ENCODE measurements at regions of chr6 and their contacts with region 1.

Region 1: GRCh38 chr6:110944681-110945151 is 13.8 kb upstream of the GTF3C6 start:
- DNase-seq: peak; percentile 71
- ATAC-seq: peak; percentile 98
- H3K4me3 Mint-ChIP-seq: no peak overlapping the region
- H3K27ac Mint-ChIP-seq: peak overlapping the region; percentile 60
- H3K4me1 Mint-ChIP-seq: peaks cover 15% of the 10 kb centered on the region
- H3K27me3 Mint-ChIP-seq: no peaks in the 10 kb centered on the region

Region 2: GRCh38 chr6:110930781-110931180 is 13.9 kb before region 1 on chr6:
- CTCF ChIA-PET with region 1: interaction called, 5 read pairs
- POLR2A ChIA-PET with region 1: interaction called, 3 read pairs
- intact Hi-C with region 1: loop called in 1 of 2 experiments (anchors 2 kb)
- DNase-seq: no peak
- ATAC-seq: no peak
- H3K4me3 Mint-ChIP-seq: no peak overlapping the region
- H3K27ac Mint-ChIP-seq: no peak overlapping the region
- H3K4me1 Mint-ChIP-seq: no peaks in the 10 kb centered on the region
- H3K27me3 Mint-ChIP-seq: no peaks in the 10 kb centered on the region

Region 3: GRCh38 chr6:110958329-110959192 is 13.8 kb after region 1 on chr6 and contains the start of gene GTF3C6:
- CTCF ChIA-PET with region 1: interaction called, 6 read pairs
- POLR2A ChIA-PET with region 1: interaction called, 15 read pairs
- intact Hi-C with region 1: loop called in 1 of 2 experiments (anchors 2 kb)
- DNase-seq: peak; percentile 97
- ATAC-seq: peak; percentile 100
- H3K4me3 Mint-ChIP-seq: peak within 1 kb of the TSS; percentile 90
- H3K27ac Mint-ChIP-seq: peak within 1 kb of the TSS; percentile 97
- H3K4me1 Mint-ChIP-seq: peaks cover 14% of the 10 kb centered on the region
- H3K27me3 Mint-ChIP-seq: peaks cover 1% of the 10 kb centered on the region
- total RNA-seq, gene GTF3C6: 93.0 to 106 TPM

Region 4: DNA sequence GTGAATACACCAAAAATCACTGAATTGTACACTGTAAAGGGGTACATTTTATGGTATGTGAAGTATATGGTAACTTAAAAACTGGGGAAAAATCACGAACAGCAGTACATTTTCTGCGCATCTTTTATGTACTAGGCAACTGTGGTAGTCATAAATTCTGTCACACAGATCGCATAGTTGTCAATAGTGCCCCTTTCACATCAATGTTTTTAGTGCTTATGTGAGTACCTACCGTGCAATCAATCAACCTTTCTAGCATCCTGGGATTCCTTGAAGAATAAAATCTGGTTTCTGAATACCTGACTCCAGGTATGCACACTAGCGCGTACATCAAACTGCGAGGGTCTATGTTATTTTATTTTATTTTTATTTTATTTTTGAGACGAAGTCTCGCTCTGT is 36.5 kb after region 1 on chr6:
- CTCF ChIA-PET with region 1: interaction called, 6 read pairs
- POLR2A ChIA-PET with region 1: no interaction called
- intact Hi-C with region 1: loop called in 1 of 2 experiments (anchors 5 kb)
- DNase-seq: no peak
- ATAC-seq: no peak
- H3K4me3 Mint-ChIP-seq: peak overlapping the region; percentile 99
- H3K27ac Mint-ChIP-seq: peak overlapping the region; percentile 97
- H3K4me1 Mint-ChIP-seq: peaks cover 31% of the 10 kb centered on the region
- H3K27me3 Mint-ChIP-seq: no peaks in the 10 kb centered on the region

Measured in activated CD4-positive, alpha-beta T cell treated with anti-CD3 and anti-CD28 coated beads for 36 hours (primary cell).